Panc1 (cell line): ENCODE measurements at regions of chr1 and their contacts with region 1.

Region 1: DNA sequence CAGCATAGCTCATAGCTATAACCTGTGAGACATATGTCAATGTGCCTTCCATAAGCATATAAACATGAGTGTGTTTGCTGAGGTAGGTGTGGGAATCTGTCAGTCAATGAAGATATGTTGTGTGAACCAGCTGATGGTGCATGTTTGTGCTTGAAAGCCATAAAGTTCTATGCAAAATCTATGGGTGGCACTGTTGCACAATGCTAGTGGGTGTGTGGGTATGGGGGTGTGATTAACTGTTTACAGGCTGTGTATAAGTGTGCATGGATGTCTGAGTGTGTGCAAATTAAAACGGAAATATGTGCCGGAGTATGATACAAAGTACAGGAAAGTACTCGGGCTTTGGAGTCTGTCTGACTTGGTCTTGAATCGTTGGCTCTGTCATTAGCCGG is 1.0 kb upstream of the ATP2B4 start:
- DNase-seq: peak; percentile 36
- ATAC-seq: no peak
- H3K4me3 ChIP-seq: no peak overlapping the region
- H3K27ac ChIP-seq: peak overlapping the region; percentile 79; the same call in 1 of the 2 replicates
- H3K4me1 ChIP-seq: peaks cover 25% of the 10 kb centered on the region
- H3K27me3 ChIP-seq: no peaks in the 10 kb centered on the region
- CTCF ChIP-seq: peak; percentile 71

Region 2: DNA sequence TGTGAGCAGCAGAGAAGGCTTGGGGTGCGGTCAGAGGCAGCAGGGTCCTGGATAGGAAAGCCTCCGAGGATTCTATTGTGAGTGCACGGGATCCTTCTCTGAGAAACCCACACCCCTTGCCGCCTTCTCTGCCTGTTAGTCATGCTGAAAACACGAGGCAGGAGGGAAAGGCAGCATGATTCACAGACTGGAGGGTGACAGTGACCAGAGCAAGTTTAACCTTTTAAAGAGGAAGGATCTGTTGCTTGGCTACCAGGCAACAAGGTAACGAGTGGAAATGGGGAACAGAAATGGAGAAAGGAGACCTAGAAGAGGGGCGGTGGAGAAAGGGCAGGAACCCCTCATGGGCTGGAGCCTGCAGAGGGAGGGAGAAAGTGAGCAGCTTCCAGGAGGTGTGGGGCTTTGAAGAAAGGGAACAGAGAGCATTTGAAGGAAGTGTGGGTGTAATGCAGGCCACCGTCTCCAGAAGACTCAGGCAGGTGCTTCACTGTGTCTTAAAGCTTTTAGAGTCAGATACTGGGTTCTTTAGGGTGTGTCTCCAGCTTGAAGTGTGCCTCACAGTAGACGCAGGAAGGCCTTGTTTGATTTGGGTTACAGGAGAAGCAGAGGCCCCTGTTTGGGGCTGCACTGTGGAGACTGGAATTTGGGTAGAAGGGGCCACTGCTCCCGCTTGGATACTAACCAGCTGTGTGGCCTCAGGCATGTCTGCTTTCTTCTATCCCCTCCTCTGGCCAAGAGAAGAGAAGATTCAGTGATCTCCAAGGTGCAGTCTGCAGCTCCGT is 112.6 kb before region 1 on chr1:
- CTCF ChIA-PET with region 1: no interaction called
- POLR2A ChIA-PET with region 1: no interaction called
- in situ Hi-C with region 1: no loop called
- intact Hi-C with region 1: loop called (anchors 10 kb)
- DNase-seq: peak; percentile 80
- ATAC-seq: peak; percentile 79
- H3K4me3 ChIP-seq: no peak overlapping the region
- H3K27ac ChIP-seq: no peak overlapping the region
- H3K4me1 ChIP-seq: peaks cover 14% of the 10 kb centered on the region
- H3K27me3 ChIP-seq: no peaks in the 10 kb centered on the region
- CTCF ChIP-seq: no peak

Region 3: GRCh38 chr1:203692565-203693470 is 67.2 kb after region 1 on chr1:
- CTCF ChIA-PET with region 1: no interaction called
- POLR2A ChIA-PET with region 1: no interaction called
- in situ Hi-C with region 1: no loop called
- intact Hi-C with region 1: loop called (anchors 5 kb)
- DNase-seq: no peak
- ATAC-seq: peak; percentile 50; the same call in 1 of the 2 replicates
- H3K4me3 ChIP-seq: no peak overlapping the region
- H3K27ac ChIP-seq: no peak overlapping the region
- H3K4me1 ChIP-seq: no peaks in the 10 kb centered on the region
- H3K27me3 ChIP-seq: no peaks in the 10 kb centered on the region
- CTCF ChIP-seq: no peak

Region 4: DNA sequence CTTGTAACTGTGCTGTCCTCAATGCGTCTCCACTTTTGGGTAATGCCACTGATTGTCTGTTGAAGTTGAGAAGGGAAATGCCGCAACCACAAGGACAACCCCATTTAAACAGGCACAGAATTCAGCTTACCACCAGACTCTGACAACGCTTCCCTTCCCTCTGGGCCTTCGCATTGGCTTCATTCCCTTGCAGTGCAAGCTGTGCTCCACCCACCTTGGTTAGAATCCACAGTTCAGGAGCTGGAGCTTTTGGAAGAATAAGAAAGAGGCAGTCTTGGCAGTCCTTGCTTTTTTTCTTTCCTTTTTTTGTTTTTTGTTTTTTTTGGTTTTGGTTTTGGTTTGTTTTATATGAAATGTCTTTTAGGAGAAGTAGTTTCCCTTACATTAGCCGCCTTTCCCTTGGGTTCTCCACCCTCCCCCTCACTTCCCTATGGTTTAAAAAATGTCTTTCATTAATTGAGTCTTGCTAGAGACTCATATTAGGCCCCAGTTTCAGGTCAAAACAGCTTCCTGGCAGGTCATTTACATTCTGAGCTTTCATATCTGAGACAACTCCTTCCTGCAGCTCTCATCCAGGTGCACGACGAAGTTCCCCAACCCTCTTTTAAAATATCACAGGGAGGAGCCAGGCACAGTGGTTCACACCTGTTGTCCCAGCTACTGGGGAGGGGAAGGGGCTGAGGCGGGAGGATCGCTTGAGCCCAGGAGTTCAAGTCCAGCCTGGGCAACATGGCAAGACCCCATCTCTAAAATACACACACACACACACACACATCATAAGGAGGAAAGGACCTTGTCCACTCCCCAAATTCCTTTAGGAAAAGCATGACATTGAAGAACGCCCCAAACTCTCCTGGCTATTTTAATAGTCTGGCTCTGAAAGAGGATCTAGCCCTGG is 118.7 kb after region 1 on chr1:
- CTCF ChIA-PET with region 1: no interaction called
- POLR2A ChIA-PET with region 1: no interaction called
- in situ Hi-C with region 1: no loop called
- intact Hi-C with region 1: no loop called
- DNase-seq: no peak
- ATAC-seq: no peak
- H3K4me3 ChIP-seq: no peak overlapping the region
- H3K27ac ChIP-seq: no peak overlapping the region
- H3K4me1 ChIP-seq: no peaks in the 10 kb centered on the region
- H3K27me3 ChIP-seq: no peaks in the 10 kb centered on the region
- CTCF ChIP-seq: no peak